Sciatic nerve (tissue), 2 donors: ENCODE measurements at regions of chr2 and their contacts with region 1.

Region 1: DNA sequence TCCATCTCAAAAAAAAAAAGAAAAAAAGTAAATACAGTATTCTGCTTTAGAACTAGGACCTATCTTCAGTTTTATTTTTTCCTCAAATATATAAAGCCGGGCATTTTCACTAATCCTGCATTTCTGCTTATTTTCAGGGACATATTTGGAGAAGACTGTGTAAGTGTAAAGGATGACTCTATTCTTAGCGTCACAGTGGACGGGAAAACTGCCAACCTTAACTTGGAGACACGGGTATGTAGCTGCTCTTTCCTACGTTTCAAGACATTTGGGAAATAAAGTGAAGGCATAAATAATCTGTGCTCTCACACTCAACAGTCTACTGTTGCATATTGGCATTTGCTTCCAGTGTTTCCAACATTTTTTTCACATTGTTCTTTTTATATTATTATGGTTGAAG is 3.1 kb upstream of the IAH1 start:
- DNase-seq: no peak
- ATAC-seq: no peak

Region 2: DNA sequence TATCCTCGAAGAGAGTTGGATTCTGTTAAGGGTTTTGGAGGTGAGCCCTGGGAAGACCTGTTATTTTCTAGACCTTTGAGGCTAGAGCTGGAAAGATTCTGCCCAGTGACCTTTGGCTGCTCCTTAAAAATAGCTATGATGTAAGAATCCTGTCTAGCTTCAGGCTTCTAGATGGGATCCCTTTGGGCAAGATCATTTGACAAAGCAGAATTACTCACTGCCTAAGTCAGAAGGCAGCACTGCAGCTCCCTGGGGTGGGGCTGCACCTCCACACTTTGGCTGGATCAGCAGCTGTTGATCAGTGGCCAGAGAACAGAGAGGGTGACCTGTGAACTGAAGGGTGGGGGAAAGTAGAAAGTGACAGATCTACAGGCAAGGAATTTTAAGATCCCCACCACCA is 160.8 kb before region 1 on chr2:
- intact Hi-C with region 1: no loop called
- DNase-seq: peak; percentile 77
- ATAC-seq: peak; percentile 96

Region 3: DNA sequence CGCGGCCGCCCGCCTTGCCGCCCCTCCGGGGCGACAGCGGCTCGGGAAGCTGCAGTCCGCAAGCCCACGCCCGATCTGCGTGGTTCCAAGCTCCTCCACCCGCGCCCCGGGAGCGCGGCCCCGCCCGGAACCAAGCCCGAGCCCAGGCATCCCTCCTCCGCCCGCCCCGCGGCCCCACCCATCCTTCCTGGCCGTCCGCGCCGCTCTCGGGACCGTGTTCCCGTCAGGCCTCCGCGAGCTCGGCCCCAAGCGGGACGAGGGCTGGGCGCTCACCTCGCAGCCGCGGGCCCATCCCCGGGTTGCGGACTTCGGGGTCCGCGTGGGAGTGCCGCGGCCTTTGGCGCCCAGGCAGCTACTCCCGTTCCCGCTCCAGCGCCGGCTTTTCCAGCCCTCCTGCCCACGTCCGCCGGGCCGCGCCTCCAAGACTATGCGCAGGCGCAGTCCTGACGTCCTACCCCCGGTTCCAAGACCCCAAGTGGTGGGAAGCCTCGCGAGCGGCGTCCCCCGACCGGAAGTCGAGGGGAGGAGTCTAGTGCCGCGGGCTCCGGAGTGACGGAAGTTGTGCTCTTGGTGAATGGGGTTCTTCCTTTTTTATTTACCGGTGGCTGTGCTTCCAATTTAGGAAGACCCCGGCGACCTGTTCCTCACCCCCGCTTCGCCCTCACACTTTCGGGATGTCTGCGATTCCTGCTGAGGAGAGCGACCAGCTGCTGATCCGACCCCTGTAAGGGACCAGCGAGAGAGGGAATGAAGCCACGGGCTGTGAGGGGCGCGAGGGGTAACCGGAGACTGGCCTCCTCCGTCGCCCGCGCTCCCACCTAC is 47.9 kb before region 1 on chr2 and contains the starts of genes CPSF3 and ITGB1BP1:
- intact Hi-C with region 1: loop called (anchors 2 kb)
- DNase-seq: peak; percentile 99
- ATAC-seq: peak; percentile 98
- total RNA-seq, gene CPSF3: 16.0 TPM
- total RNA-seq, gene ITGB1BP1: 163 TPM